Heart right ventricle (tissue), 16 donors: ENCODE measurements at regions of chr4 and their contacts with region 1.

Region 1: GRCh38 chr4:17324386-17324830 is 187.5 kb downstream of the QDPR start:
- DNase-seq: peak in 1 of 2 donors; percentile 69
- ATAC-seq: peak; percentile 34 to 87 (median 72)
- H3K4me3 ChIP-seq: peak overlapping the region in 2 of 10 donors; percentile 11 to 16
- H3K27ac ChIP-seq: no peak overlapping the region
- H3K4me1 ChIP-seq: peaks cover 0 to 18% (median 10%) of the 10 kb centered on the region in 9 donors
- H3K27me3 ChIP-seq: no peaks in the 10 kb centered on the region
- CTCF ChIP-seq: peak; percentile 52 to 89 (median 72)

Region 2: GRCh38 chr4:16505726-16506125 is 818.7 kb before region 1 on chr4:
- intact Hi-C with region 1: loop called in 5 of 10 experiments (anchors 10 kb)
- DNase-seq: no peak
- ATAC-seq: peak in 4 of 8 donors; percentile 49 to 78 (median 55)
- H3K4me3 ChIP-seq: no peak overlapping the region
- H3K27ac ChIP-seq: no peak overlapping the region
- H3K4me1 ChIP-seq: no peaks in the 10 kb centered on the region
- H3K27me3 ChIP-seq: no peaks in the 10 kb centered on the region
- CTCF ChIP-seq: peak in 6 of 9 donors; percentile 28 to 57 (median 38)

Region 3: DNA sequence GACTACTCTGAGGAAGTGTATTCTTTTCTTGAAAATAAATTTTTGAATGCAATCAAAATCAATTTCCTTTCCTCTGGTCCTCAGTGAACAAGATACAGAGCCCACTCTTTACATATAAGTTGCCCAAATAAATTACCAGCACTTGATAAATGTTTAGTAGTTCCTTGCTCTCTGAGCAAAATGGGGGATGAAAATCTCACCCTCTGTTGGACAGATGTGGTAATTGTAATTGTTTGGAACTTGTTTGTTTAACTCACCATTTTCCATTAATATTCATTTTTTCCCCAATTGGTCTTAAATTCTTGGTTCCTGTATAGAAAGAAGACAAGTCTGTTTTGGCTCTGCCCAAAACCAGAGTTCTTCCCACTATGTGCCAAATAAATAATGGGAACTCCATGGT is 572.3 kb before region 1 on chr4:
- intact Hi-C with region 1: loop called in 2 of 10 experiments (anchors 5 to 10 kb)
- DNase-seq: no peak
- ATAC-seq: no peak
- H3K4me3 ChIP-seq: no peak overlapping the region
- H3K27ac ChIP-seq: no peak overlapping the region
- H3K4me1 ChIP-seq: peaks cover 0 to 15% (median 0%) of the 10 kb centered on the region in 9 donors
- H3K27me3 ChIP-seq: no peaks in the 10 kb centered on the region
- CTCF ChIP-seq: peak in 7 of 9 donors; percentile 11 to 46 (median 28)

Region 4: DNA sequence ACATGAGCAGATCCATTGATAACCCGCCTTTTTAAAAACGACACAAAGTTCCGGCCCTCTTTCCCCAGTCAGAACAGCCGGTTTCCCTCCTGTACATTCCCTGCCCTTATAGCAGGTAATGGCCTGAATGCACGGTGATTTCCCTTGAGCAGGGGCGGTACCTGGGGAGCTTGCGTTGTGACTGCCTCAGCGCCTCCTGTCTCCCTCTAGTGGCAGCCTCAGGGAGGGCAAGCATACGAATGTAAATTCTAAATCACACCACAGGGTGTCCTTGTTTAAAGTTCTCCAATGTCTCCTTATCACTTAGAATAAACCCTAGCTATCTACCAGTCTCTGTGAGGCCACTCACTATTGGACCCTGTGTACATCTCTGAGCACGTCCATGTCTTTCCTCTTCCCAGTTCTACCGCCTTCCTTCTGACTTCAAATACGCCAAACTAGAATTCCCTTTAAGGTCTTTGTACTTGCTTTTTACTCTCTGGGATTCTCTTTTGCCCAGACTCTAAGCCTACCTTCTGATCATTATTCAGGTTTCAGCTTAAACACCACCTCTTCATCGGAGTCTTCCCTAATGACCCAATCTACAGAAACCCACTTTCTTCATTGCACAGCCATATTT is 407.6 kb before region 1 on chr4:
- intact Hi-C with region 1: loop called (anchors 2 to 10 kb)
- DNase-seq: peak; percentile 19 to 39
- ATAC-seq: peak in 5 of 8 donors; percentile 41 to 68 (median 46)
- H3K4me3 ChIP-seq: no peak overlapping the region
- H3K27ac ChIP-seq: no peak overlapping the region
- H3K4me1 ChIP-seq: no peaks in the 10 kb centered on the region
- H3K27me3 ChIP-seq: no peaks in the 10 kb centered on the region
- CTCF ChIP-seq: peak; percentile 63 to 83 (median 74)